CD8-positive, alpha-beta T cell (primary cell): ENCODE measurements at regions of chr10 and their contacts with region 1.

Region 1: GRCh38 chr10:25888627-25889026 is 45.4 kb upstream of the MYO3A start:
- DNase-seq: no peak
- ATAC-seq: no peak
- H3K4me3 ChIP-seq: no peak overlapping the region
- H3K4me3 Mint-ChIP-seq: no peak overlapping the region
- H3K27ac ChIP-seq: no peak overlapping the region
- H3K27ac Mint-ChIP-seq: no peak overlapping the region
- H3K4me1 ChIP-seq: no peaks in the 10 kb centered on the region
- H3K4me1 Mint-ChIP-seq: no peaks in the 10 kb centered on the region
- H3K27me3 ChIP-seq: peaks cover 0 to 3% of the 10 kb centered on the region in 2 experiments
- H3K27me3 Mint-ChIP-seq: peaks cover 6% of the 10 kb centered on the region
- CTCF ChIP-seq: no peak

Region 2: GRCh38 chr10:25875556-25876165 is 13.0 kb before region 1 on chr10:
- CTCF ChIA-PET with region 1: interaction called, 12 read pairs
- POLR2A ChIA-PET with region 1: no interaction called
- intact Hi-C with region 1: no loop called
- DNase-seq: peak; percentile 21 to 66 (median 59)
- ATAC-seq: peak; percentile 62
- H3K4me3 ChIP-seq: no peak overlapping the region
- H3K4me3 Mint-ChIP-seq: no peak overlapping the region
- H3K27ac ChIP-seq: no peak overlapping the region
- H3K27ac Mint-ChIP-seq: no peak overlapping the region
- H3K4me1 ChIP-seq: no peaks in the 10 kb centered on the region
- H3K4me1 Mint-ChIP-seq: no peaks in the 10 kb centered on the region
- H3K27me3 ChIP-seq: no peaks in the 10 kb centered on the region
- H3K27me3 Mint-ChIP-seq: no peaks in the 10 kb centered on the region
- CTCF ChIP-seq: peak; percentile 67

Region 3: GRCh38 chr10:26310361-26310760 is 421.7 kb after region 1 on chr10:
- CTCF ChIA-PET with region 1: no interaction called
- POLR2A ChIA-PET with region 1: no interaction called
- intact Hi-C with region 1: loop called in 1 of 2 experiments (anchors 5 kb)
- DNase-seq: no peak
- ATAC-seq: no peak
- H3K4me3 ChIP-seq: no peak overlapping the region
- H3K4me3 Mint-ChIP-seq: no peak overlapping the region
- H3K27ac ChIP-seq: no peak overlapping the region
- H3K27ac Mint-ChIP-seq: no peak overlapping the region
- H3K4me1 ChIP-seq: no peaks in the 10 kb centered on the region
- H3K4me1 Mint-ChIP-seq: no peaks in the 10 kb centered on the region
- H3K27me3 ChIP-seq: peaks cover 0 to 3% of the 10 kb centered on the region in 2 experiments
- H3K27me3 Mint-ChIP-seq: peaks cover 42% of the 10 kb centered on the region
- CTCF ChIP-seq: no peak